Heart left ventricle (tissue), 16 donors: ENCODE measurements at regions of chr11 and their contacts with region 1.

Region 1: GRCh38 chr11:83724008-83724461 is 437.9 kb upstream of the CCDC90B start:
- DNase-seq: peak in 2 of 5 donors; percentile 16 to 28
- ATAC-seq: peak; percentile 32 to 87 (median 68)
- H3K4me3 ChIP-seq: peak overlapping the region in 9 of 12 donors; percentile 35 to 58 (median 47)
- H3K27ac ChIP-seq: peak overlapping the region in 3 of 12 donors; percentile 10 to 27 (median 22)
- H3K4me1 ChIP-seq: peaks cover 0 to 18% (median 9%) of the 10 kb centered on the region in 12 donors
- H3K27me3 ChIP-seq: no peaks in the 10 kb centered on the region
- CTCF ChIP-seq: peak in 11 of 12 donors; percentile 21 to 64 (median 54)
- POLR2A ChIP-seq: no peak

Region 2: DNA sequence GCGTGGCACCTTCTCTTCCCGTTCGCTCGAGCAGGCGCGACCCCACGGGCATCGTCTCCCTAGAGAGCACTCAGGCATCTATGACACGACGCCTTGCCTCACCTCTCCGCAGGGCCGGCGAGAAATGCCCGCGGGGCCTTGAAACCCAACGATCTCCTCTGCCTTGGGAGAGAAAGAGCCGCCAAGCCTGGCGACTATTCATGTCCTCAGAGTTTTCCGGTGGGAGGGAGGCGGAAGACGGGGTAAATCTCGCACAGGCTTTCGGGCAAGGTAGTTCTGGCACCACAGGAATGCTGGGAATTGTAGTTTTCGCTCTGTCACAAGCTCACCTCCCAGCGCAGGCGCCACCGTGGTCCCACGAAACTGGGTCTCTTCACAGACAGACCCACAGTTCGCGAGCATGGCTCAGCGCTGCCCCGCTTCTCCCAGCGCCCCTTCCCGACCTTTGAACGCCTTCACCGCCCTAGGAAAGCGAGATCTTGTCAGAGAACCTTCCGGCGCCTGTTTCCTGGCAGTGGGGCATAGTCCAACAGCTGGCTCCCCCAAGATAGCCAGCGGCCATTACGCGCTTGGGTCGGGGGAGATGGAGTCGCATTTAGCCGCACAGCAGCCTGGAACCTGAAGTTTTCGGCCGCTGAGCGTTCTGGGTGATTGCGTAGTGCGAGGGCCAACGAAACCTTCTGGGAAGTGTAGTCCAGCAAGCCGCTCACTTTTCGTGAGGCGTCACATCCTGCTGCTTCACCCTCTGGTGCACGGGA is 438.1 kb before region 1 on chr11 and contains the start of gene CCDC90B:
- intact Hi-C with region 1: loop called in 7 of 10 experiments (anchors 5 to 10 kb)
- DNase-seq: peak; percentile 95 to 98 (median 96)
- ATAC-seq: peak; percentile 98 to 99 (median 98)
- H3K4me3 ChIP-seq: peak within 1 kb of the TSS; percentile 29 to 99 (median 83)
- H3K27ac ChIP-seq: peak within 1 kb of the TSS; percentile 90 to 99 (median 98)
- H3K4me1 ChIP-seq: peaks cover 0 to 45% (median 26%) of the 10 kb centered on the region in 12 donors
- H3K27me3 ChIP-seq: no peaks in the 10 kb centered on the region
- CTCF ChIP-seq: peak in 3 of 12 donors; percentile 14 to 46 (median 29)
- POLR2A ChIP-seq: peak in 1 of 2 donors; percentile 84
- total RNA-seq, gene CCDC90B: 18.0 to 31.7 (median 26.7) TPM

Region 3: DNA sequence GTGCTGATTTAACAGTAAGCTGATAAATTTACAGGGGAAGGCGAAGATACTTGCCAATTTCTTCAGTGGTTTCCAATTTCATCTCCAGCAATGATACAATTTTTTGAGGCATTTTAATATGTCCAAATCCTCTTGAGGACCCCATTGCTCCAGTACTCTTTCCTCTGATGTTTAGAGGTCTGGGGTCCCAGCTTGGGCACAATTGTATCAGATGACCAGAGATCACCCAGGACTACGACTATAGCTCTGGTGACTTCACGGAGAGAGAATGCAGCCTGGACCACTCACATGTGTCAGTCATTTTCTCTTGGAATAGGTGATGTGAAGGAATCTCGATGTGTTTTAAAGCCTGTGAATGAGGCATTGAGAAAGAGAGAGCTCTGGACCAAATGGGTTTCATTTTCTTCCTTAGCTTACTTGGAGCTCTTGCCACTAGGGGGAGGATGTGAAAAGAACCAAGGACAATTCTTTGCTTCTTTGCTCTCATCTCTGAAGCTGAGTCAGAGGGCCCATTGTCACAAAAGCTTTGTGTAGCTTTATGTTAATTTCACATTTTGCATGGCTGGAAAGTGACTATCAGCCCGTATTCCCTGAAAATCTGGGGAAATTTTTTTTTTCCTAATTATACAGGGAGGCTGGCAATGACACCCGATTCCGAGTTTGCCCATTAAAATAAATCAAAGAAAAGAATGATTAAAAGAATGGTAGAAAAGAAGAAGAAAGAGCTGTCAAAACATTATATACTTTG is 431.2 kb before region 1 on chr11:
- intact Hi-C with region 1: loop called (anchors 2 to 10 kb)
- DNase-seq: no peak
- ATAC-seq: peak in 3 of 4 donors; percentile 50 to 70 (median 61)
- H3K4me3 ChIP-seq: peak overlapping the region in 3 of 12 donors; percentile 4 to 14 (median 6)
- H3K27ac ChIP-seq: no peak overlapping the region
- H3K4me1 ChIP-seq: peaks cover 0 to 3% (median 0%) of the 10 kb centered on the region in 12 donors
- H3K27me3 ChIP-seq: no peaks in the 10 kb centered on the region
- CTCF ChIP-seq: peak; percentile 48 to 75 (median 62)
- POLR2A ChIP-seq: no peak

Region 4: GRCh38 chr11:83299681-83300080 is 424.4 kb before region 1 on chr11:
- intact Hi-C with region 1: loop called in 7 of 10 experiments (anchors 5 to 10 kb)
- DNase-seq: no peak
- ATAC-seq: no peak
- H3K4me3 ChIP-seq: no peak overlapping the region
- H3K27ac ChIP-seq: no peak overlapping the region
- H3K4me1 ChIP-seq: peaks cover 0 to 8% (median 0%) of the 10 kb centered on the region in 12 donors
- H3K27me3 ChIP-seq: no peaks in the 10 kb centered on the region
- CTCF ChIP-seq: no peak
- POLR2A ChIP-seq: no peak

Region 5: DNA sequence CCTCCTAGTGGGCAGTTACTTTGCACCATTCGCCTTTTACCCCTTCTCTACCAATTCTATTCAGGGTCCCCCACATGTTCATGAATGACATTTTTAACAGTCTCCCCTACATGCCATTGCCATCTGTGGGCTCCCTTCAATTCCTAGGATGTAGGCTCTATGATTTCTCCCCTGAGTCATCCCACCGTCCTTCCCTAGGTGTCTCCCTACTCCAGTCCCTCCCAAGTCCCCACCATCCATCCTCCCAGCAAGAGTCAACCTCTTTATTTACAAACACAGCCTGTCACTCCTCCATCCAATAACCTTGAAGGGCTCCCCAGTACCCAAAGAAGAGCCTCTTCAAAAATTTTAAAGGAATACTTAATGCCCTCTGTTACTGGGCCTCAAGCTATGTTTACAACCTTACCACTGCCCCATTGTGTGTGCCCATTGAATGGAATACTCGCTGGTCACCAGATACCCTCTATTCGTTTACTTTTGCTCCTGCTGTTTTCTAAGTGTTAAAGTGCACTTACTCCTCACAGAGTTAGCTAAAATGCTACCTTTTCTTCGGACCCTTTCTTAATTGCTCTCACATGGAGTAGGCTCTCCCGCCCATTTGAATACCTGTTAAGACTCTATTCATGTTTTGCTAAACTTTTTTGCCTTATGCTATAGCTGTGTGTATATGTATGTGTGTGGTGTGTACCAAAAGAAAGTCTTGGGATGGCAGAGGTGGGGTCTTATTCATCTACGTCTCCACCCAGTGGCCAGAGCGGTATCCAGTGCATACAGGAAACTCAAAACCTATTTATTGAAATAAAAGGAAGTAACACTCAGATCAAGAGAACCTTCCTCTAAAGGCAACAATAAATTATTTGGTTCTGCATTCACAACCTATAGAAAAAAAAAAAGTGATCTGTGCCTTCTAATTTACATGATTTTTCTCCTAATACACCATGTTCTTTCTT is 202.1 kb before region 1 on chr11:
- intact Hi-C with region 1: loop called in 1 of 10 experiments (anchors 5 kb)
- DNase-seq: no peak
- ATAC-seq: peak in 1 of 4 donors; percentile 46
- H3K4me3 ChIP-seq: no peak overlapping the region
- H3K27ac ChIP-seq: no peak overlapping the region
- H3K4me1 ChIP-seq: no peaks in the 10 kb centered on the region
- H3K27me3 ChIP-seq: no peaks in the 10 kb centered on the region
- CTCF ChIP-seq: peak in 1 of 12 donors; percentile 17
- POLR2A ChIP-seq: no peak

Region 6: DNA sequence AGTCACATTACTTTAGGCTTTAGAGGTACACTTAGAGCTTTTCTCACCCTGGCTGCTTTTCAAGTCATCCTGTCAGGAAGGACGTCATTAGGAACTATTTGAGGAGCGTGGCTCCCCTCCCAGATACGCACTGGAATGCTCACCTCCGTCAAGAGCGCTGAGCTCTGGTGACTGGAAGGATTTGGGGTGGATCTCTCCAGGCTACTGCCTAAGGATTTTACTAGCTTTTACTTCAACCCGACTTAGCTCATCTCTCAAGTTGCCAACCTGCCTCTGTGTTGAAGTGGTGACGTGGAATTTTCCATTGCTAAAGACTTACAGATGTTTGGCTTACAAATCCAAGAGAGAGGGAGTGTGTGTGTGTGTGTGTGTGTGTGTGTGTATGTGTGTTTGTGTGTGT is 82.5 kb before region 1 on chr11:
- intact Hi-C with region 1: loop called in 1 of 10 experiments (anchors 10 kb)
- DNase-seq: peak in 4 of 5 donors; percentile 31 to 69 (median 56)
- ATAC-seq: peak; percentile 37 to 98 (median 98)
- H3K4me3 ChIP-seq: no peak overlapping the region
- H3K27ac ChIP-seq: peak overlapping the region in 4 of 12 donors; percentile 3 to 39 (median 26)
- H3K4me1 ChIP-seq: peaks cover 0 to 13% (median 0%) of the 10 kb centered on the region in 12 donors
- H3K27me3 ChIP-seq: no peaks in the 10 kb centered on the region
- CTCF ChIP-seq: no peak
- POLR2A ChIP-seq: no peak

Region 7: DNA sequence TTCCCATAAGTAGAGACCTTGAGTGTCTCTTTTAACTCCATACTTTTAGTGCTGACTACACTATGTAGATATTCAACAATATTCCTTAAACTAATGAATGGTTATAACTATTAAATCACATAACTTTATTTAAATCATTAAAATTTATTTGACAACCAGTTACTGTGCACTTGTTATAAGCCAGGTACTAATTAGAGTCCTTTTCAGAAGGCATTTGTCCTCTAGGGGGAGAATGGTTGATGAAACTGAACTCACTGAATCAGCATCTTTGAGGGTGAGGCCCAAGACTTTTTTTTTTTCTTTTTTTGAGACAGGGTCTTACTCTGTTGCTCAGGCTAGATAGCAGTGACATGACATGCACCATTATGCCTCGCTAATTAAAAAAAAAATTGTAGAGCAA is 77.7 kb after region 1 on chr11:
- intact Hi-C with region 1: no loop called
- DNase-seq: no peak
- ATAC-seq: no peak
- H3K4me3 ChIP-seq: no peak overlapping the region
- H3K27ac ChIP-seq: no peak overlapping the region
- H3K4me1 ChIP-seq: no peaks in the 10 kb centered on the region
- H3K27me3 ChIP-seq: no peaks in the 10 kb centered on the region
- CTCF ChIP-seq: no peak
- POLR2A ChIP-seq: no peak